CD8-positive, alpha-beta T cell (primary cell): ENCODE measurements at regions of chr7 and their contacts with region 1.

Region 1: GRCh38 chr7:114865564-114865963 is 56.3 kb upstream of the MDFIC start:
- DNase-seq: peak; percentile 18 to 71 (median 53)
- ATAC-seq: peak; percentile 64
- H3K4me3 ChIP-seq: no peak overlapping the region
- H3K4me3 Mint-ChIP-seq: no peak overlapping the region
- H3K27ac ChIP-seq: no peak overlapping the region
- H3K27ac Mint-ChIP-seq: no peak overlapping the region
- H3K4me1 ChIP-seq: no peaks in the 10 kb centered on the region
- H3K4me1 Mint-ChIP-seq: no peaks in the 10 kb centered on the region
- H3K27me3 ChIP-seq: no peaks in the 10 kb centered on the region
- H3K27me3 Mint-ChIP-seq: no peaks in the 10 kb centered on the region
- CTCF ChIP-seq: peak; percentile 63

Region 2: DNA sequence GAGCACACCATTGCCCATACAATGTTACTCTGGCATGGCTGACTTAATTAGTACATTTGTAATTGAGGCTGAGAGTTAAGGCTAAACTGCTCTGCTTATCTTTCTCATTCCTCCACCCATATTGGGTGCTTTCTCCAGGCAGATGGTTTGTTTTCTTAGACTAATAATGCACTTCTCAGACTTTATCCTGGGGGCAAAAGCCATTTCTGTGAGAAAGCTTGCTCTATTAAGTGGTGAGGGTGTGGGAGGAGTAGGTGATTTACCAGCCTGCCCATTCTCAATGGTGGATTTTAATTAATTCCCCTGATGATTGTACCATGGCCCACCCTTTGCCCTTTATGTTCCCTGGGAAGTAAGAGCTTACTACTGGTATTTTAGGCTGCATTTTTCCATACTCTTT is 276.1 kb before region 1 on chr7:
- CTCF ChIA-PET with region 1: no interaction called
- POLR2A ChIA-PET with region 1: no interaction called
- intact Hi-C with region 1: no loop called
- DNase-seq: no peak
- ATAC-seq: no peak
- H3K4me3 ChIP-seq: no peak overlapping the region
- H3K4me3 Mint-ChIP-seq: no peak overlapping the region
- H3K27ac ChIP-seq: no peak overlapping the region
- H3K27ac Mint-ChIP-seq: no peak overlapping the region
- H3K4me1 ChIP-seq: no peaks in the 10 kb centered on the region
- H3K4me1 Mint-ChIP-seq: no peaks in the 10 kb centered on the region
- H3K27me3 ChIP-seq: no peaks in the 10 kb centered on the region
- H3K27me3 Mint-ChIP-seq: no peaks in the 10 kb centered on the region
- CTCF ChIP-seq: no peak

Region 3: GRCh38 chr7:114953724-114954123 is 88.2 kb after region 1 on chr7:
- CTCF ChIA-PET with region 1: interaction called, 6 read pairs
- POLR2A ChIA-PET with region 1: no interaction called
- intact Hi-C with region 1: loop called in 1 of 2 experiments (anchors 2 kb)
- DNase-seq: no peak
- ATAC-seq: no peak
- H3K4me3 ChIP-seq: no peak overlapping the region
- H3K4me3 Mint-ChIP-seq: no peak overlapping the region
- H3K27ac ChIP-seq: no peak overlapping the region
- H3K27ac Mint-ChIP-seq: no peak overlapping the region
- H3K4me1 ChIP-seq: peaks cover 18% of the 10 kb centered on the region
- H3K4me1 Mint-ChIP-seq: peaks cover 54% of the 10 kb centered on the region
- H3K27me3 ChIP-seq: no peaks in the 10 kb centered on the region
- H3K27me3 Mint-ChIP-seq: no peaks in the 10 kb centered on the region
- CTCF ChIP-seq: no peak

Region 4: GRCh38 chr7:115387137-115387536 is 521.6 kb after region 1 on chr7:
- CTCF ChIA-PET with region 1: no interaction called
- POLR2A ChIA-PET with region 1: no interaction called
- intact Hi-C with region 1: loop called in 1 of 2 experiments (anchors 10 kb)
- DNase-seq: no peak
- ATAC-seq: no peak
- H3K4me3 ChIP-seq: no peak overlapping the region
- H3K4me3 Mint-ChIP-seq: no peak overlapping the region
- H3K27ac ChIP-seq: no peak overlapping the region
- H3K27ac Mint-ChIP-seq: no peak overlapping the region
- H3K4me1 ChIP-seq: no peaks in the 10 kb centered on the region
- H3K4me1 Mint-ChIP-seq: no peaks in the 10 kb centered on the region
- H3K27me3 ChIP-seq: no peaks in the 10 kb centered on the region
- H3K27me3 Mint-ChIP-seq: peaks cover 4% of the 10 kb centered on the region
- CTCF ChIP-seq: no peak

Region 5: GRCh38 chr7:115748131-115748738 is 882.7 kb after region 1 on chr7:
- CTCF ChIA-PET with region 1: interaction called, 3 read pairs
- POLR2A ChIA-PET with region 1: no interaction called
- intact Hi-C with region 1: loop called in 1 of 2 experiments (anchors 5 kb)
- DNase-seq: peak in 2 of 9 experiments; percentile 18 to 20
- ATAC-seq: no peak
- H3K4me3 ChIP-seq: no peak overlapping the region
- H3K4me3 Mint-ChIP-seq: no peak overlapping the region
- H3K27ac ChIP-seq: no peak overlapping the region
- H3K27ac Mint-ChIP-seq: no peak overlapping the region
- H3K4me1 ChIP-seq: no peaks in the 10 kb centered on the region
- H3K4me1 Mint-ChIP-seq: no peaks in the 10 kb centered on the region
- H3K27me3 ChIP-seq: no peaks in the 10 kb centered on the region
- H3K27me3 Mint-ChIP-seq: no peaks in the 10 kb centered on the region
- CTCF ChIP-seq: no peak

Region 6: GRCh38 chr7:115910541-115911164 is 1045.1 kb after region 1 on chr7:
- CTCF ChIA-PET with region 1: no interaction called
- POLR2A ChIA-PET with region 1: no interaction called
- intact Hi-C with region 1: loop called in 1 of 2 experiments (anchors 5 kb)
- DNase-seq: peak in 2 of 9 experiments; percentile 3 to 17
- ATAC-seq: no peak
- H3K4me3 ChIP-seq: no peak overlapping the region
- H3K4me3 Mint-ChIP-seq: no peak overlapping the region
- H3K27ac ChIP-seq: no peak overlapping the region
- H3K27ac Mint-ChIP-seq: no peak overlapping the region
- H3K4me1 ChIP-seq: no peaks in the 10 kb centered on the region
- H3K4me1 Mint-ChIP-seq: no peaks in the 10 kb centered on the region
- H3K27me3 ChIP-seq: no peaks in the 10 kb centered on the region
- H3K27me3 Mint-ChIP-seq: no peaks in the 10 kb centered on the region
- CTCF ChIP-seq: peak; percentile 35